H1 (cell line): ENCODE measurements at regions of chr14 and their contacts with region 1.

Region 1: DNA sequence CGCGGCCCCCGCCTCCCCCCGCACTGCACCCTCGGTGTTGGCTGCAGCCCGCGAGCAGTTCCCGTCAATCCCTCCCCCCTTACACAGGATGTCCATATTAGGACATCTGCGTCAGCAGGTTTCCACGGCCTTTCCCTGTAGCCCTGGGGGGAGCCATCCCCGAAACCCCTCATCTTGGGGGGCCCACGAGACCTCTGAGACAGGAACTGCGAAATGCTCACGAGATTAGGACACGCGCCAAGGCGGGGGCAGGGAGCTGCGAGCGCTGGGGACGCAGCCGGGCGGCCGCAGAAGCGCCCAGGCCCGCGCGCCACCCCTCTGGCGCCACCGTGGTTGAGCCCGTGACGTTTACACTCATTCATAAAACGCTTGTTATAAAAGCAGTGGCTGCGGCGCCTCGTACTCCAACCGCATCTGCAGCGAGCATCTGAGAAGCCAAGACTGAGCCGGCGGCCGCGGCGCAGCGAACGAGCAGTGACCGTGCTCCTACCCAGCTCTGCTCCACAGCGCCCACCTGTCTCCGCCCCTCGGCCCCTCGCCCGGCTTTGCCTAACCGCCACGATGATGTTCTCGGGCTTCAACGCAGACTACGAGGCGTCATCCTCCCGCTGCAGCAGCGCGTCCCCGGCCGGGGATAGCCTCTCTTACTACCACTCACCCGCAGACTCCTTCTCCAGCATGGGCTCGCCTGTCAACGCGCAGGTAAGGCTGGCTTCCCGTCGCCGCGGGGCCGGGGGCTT is at the start of gene FOS:
- DNase-seq: peak in 1 of 2 experiments; percentile 91
- H3K4me3 ChIP-seq: peak within 1 kb of the TSS; percentile 71 to 85 (median 76)
- H3K27ac ChIP-seq: peak within 1 kb of the TSS; percentile 100
- H3K4me1 ChIP-seq: peaks cover 4 to 11% (median 10%) of the 10 kb centered on the region in 4 experiments
- H3K27me3 ChIP-seq: peaks cover 0 to 26% (median 10%) of the 10 kb centered on the region in 4 experiments; a peak in 5 of 7 replicates
- CTCF ChIP-seq: no peak
- EP300 ChIP-seq: peak in 1 of 2 experiments; percentile 99; a peak in 2 of 3 replicates
- POLR2A ChIP-seq: peak; percentile 99
- RAD21 ChIP-seq: no peak
- total RNA-seq, gene FOS: 51.5 and 51.8 TPM in 2 replicates

Region 2: DNA sequence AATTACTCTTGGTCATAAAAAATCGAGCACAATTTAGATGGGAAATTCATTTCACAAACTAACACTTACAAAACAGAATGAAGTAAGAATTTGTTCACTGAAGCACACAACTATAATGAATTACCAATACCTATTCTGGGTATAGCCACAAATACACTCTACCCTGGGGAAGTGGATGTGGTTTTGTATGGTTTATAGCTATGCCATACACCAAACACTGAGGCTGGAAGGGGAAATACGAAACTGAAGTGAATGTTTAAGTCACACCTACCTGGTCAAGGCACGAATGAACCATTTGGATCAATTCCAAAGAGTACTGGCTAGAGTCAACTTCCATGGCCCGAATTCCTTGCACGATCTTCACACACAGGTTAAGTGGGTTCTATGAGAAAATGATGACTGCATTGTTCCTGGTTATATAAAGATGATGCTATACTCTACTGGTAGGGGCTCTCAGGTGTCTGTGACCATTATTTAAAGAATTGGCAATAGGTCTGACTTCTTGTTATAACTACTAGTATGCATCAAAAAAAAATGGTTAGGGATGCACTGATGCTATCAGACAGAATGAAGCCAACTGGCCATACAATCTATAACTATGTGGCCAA is 164.6 kb before region 1 on chr14:
- CTCF ChIA-PET with region 1: no interaction called
- POLR2A ChIA-PET with region 1: no interaction called
- DNase-seq: no peak
- H3K4me3 ChIP-seq: no peak overlapping the region
- H3K27ac ChIP-seq: no peak overlapping the region
- H3K4me1 ChIP-seq: no peaks in the 10 kb centered on the region
- H3K27me3 ChIP-seq: no peaks in the 10 kb centered on the region
- CTCF ChIP-seq: no peak
- EP300 ChIP-seq: no peak
- POLR2A ChIP-seq: no peak
- RAD21 ChIP-seq: no peak

Region 3: GRCh38 chr14:75182841-75183624 is 95.6 kb before region 1 on chr14:
- CTCF ChIA-PET with region 1: interaction called, 3 read pairs
- POLR2A ChIA-PET with region 1: interaction called, 10 read pairs
- DNase-seq: no peak
- H3K4me3 ChIP-seq: no peak overlapping the region
- H3K27ac ChIP-seq: no peak overlapping the region
- H3K4me1 ChIP-seq: no peaks in the 10 kb centered on the region; a peak in 1 of 7 replicates
- H3K27me3 ChIP-seq: no peaks in the 10 kb centered on the region
- CTCF ChIP-seq: no peak
- EP300 ChIP-seq: no peak
- POLR2A ChIP-seq: no peak
- RAD21 ChIP-seq: no peak

Region 4: DNA sequence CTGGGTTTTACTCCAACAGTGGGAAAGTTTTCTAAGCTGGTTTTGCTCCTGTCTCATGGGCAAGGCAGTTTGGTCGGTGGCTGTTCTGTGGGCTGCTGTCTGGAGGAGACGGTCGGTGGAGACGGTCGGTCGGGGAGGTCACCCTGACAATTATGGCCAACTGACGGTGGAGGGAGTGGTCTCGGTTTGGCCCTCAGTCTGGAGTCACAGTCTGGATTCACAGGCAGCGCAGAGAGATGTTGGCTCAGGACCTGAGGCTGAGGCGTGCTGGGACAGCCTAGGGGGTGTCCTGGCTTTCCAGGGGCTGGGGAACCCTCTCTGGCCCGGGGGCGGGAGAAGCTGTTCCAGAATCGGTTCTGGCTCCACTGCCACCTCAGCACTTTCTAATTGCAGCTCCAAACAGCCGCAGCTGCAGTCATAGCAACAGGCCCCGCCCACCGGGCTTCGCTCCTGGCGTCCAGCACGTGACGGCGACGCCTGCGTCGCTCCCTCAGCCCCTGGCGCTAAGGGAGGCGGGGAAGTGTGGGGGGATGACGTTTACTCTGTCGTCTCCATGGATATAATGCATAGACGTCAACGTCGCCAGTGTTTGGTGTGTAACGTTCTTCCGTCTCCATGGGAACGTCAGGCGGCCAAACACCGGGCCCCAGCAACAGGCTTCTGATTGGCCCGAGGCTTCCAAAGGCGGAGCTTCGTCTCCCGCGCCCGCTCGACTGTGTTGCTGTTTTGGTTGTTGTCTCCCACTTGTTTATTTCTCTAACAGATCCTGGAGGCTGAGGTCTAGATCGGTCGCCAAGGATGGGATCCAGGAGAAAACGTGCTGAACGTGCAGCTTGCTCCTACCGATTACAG is 19.8 kb before region 1 on chr14:
- CTCF ChIA-PET with region 1: interaction called, 7 read pairs
- POLR2A ChIA-PET with region 1: interaction called, 51 read pairs
- DNase-seq: peak; percentile 98 to 99
- H3K4me3 ChIP-seq: peak overlapping the region; percentile 55 to 74 (median 66)
- H3K27ac ChIP-seq: peak overlapping the region; percentile 98
- H3K4me1 ChIP-seq: peaks cover 0 to 11% (median 4%) of the 10 kb centered on the region in 4 experiments; a peak in 5 of 7 replicates
- H3K27me3 ChIP-seq: no peaks in the 10 kb centered on the region
- CTCF ChIP-seq: no peak; a peak in 1 of 4 replicates
- EP300 ChIP-seq: peak; percentile 70 to 98; a peak in 2 of 3 replicates
- POLR2A ChIP-seq: peak; percentile 57 to 99
- RAD21 ChIP-seq: no peak

Region 5: GRCh38 chr14:75267141-75267721 is 11.4 kb before region 1 on chr14:
- CTCF ChIA-PET with region 1: no interaction called
- POLR2A ChIA-PET with region 1: interaction called, 54 read pairs
- DNase-seq: no peak
- H3K4me3 ChIP-seq: no peak overlapping the region
- H3K27ac ChIP-seq: no peak overlapping the region
- H3K4me1 ChIP-seq: peaks cover 4 to 7% (median 6%) of the 10 kb centered on the region in 4 experiments; a peak in 5 of 7 replicates
- H3K27me3 ChIP-seq: no peaks in the 10 kb centered on the region
- CTCF ChIP-seq: no peak
- EP300 ChIP-seq: no peak
- POLR2A ChIP-seq: no peak
- RAD21 ChIP-seq: no peak

Region 6: GRCh38 chr14:75301666-75302325 is 23.2 kb after region 1 on chr14:
- CTCF ChIA-PET with region 1: interaction called, 83 read pairs
- POLR2A ChIA-PET with region 1: interaction called, 16 read pairs
- DNase-seq: no peak
- H3K4me3 ChIP-seq: no peak overlapping the region
- H3K27ac ChIP-seq: no peak overlapping the region
- H3K4me1 ChIP-seq: no peaks in the 10 kb centered on the region
- H3K27me3 ChIP-seq: no peaks in the 10 kb centered on the region
- CTCF ChIP-seq: no peak
- EP300 ChIP-seq: no peak
- POLR2A ChIP-seq: no peak
- RAD21 ChIP-seq: no peak